Naive thymus-derived CD8-positive, alpha-beta T cell (primary cell): ENCODE measurements at regions of chr12 and their contacts with region 1.

Region 1: DNA sequence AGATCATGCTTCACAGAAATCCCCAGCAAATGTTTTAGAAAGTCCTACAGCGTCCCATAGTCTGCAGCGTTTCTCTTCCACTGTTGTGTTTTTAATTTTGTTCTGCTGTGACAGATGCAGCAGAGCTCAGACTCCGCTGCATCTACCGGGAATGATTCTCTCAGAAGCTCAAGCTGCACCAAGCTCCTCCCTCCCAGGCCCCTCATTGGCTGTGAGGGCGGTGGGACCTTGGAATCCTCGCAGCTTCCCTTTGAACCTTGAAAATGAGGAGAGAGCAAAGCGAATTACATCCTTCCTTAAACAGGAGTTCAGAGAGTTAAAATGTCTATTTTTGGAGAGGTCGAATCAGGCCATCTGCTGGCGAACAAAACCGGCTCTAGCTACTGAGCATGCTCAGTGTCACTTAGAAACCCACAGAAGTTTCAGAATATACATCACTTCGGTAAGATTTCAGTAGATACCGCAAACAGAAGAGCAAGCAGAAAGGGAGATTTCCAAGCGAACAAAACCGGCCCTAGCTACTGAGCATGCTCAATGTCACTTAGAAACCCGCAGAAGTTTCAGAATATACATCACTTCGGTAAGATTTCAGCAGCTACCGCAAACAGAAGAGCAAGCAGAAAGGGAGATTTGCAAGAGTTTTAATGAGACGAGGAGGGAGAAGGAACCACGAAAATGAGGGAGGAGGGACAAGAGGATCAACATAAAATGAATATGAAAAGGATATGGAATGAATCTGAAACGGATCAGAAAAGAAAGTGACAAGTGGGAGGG is at the start of gene ABCD2:
- DNase-seq: peak; percentile 51 to 88 (median 77)
- ATAC-seq: peak; percentile 82 to 84
- H3K4me3 Mint-ChIP-seq: no peak within 1 kb of the TSS
- H3K27ac Mint-ChIP-seq: no peak within 1 kb of the TSS
- H3K4me1 Mint-ChIP-seq: peaks cover 17 to 46% (median 38%) of the 10 kb centered on the region in 4 donors
- H3K27me3 Mint-ChIP-seq: no peaks in the 10 kb centered on the region
- polyA plus RNA-seq, gene ABCD2: 12.1 to 14.0 (median 12.7) TPM

Region 2: DNA sequence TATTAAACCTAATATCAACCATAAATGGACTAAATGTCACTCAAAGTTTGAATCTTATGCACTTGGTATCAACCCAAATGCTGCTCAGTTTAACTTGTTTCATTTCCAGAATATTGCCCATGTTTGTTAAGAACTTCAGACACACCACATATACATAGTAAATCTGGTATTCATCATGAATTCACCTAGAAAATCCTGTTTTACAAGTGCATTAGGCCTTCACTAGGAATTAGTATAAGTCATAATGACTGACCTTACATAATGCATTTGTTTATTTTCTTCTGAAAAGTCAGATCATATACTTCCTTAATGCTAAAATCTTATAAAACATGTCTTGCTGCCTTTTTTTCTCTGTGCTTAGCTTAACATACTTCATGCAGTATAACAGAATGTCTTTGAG is 66.4 kb before region 1 on chr12:
- POLR2A ChIA-PET with region 1: no interaction called
- DNase-seq: no peak
- ATAC-seq: no peak
- H3K4me3 Mint-ChIP-seq: no peak overlapping the region
- H3K27ac Mint-ChIP-seq: peak overlapping the region in 1 of 10 donors; percentile 37
- H3K4me1 Mint-ChIP-seq: peaks cover 0 to 6% (median 2%) of the 10 kb centered on the region in 4 donors
- H3K27me3 Mint-ChIP-seq: no peaks in the 10 kb centered on the region

Region 3: GRCh38 chr12:39605501-39605900 is 14.3 kb before region 1 on chr12:
- POLR2A ChIA-PET with region 1: interaction called, 14 read pairs
- DNase-seq: no peak
- ATAC-seq: peak in 1 of 2 donors; percentile 28
- H3K4me3 Mint-ChIP-seq: peak overlapping the region in 2 of 10 donors; percentile 3 to 13
- H3K27ac Mint-ChIP-seq: peak overlapping the region in 5 of 10 donors; percentile 11 to 81 (median 66)
- H3K4me1 Mint-ChIP-seq: peaks cover 13 to 43% (median 35%) of the 10 kb centered on the region in 4 donors
- H3K27me3 Mint-ChIP-seq: no peaks in the 10 kb centered on the region

Region 4: GRCh38 chr12:39643052-39643451 is 23.2 kb after region 1 on chr12:
- POLR2A ChIA-PET with region 1: no interaction called
- DNase-seq: no peak
- ATAC-seq: no peak
- H3K4me3 Mint-ChIP-seq: no peak overlapping the region
- H3K27ac Mint-ChIP-seq: no peak overlapping the region
- H3K4me1 Mint-ChIP-seq: peaks cover 2 to 8% (median 7%) of the 10 kb centered on the region in 4 donors
- H3K27me3 Mint-ChIP-seq: no peaks in the 10 kb centered on the region

Region 5: GRCh38 chr12:39671898-39672875 is 52.3 kb after region 1 on chr12:
- POLR2A ChIA-PET with region 1: interaction called, 42 read pairs
- DNase-seq: peak in 1 of 10 donors; percentile 61
- ATAC-seq: no peak
- H3K4me3 Mint-ChIP-seq: peak overlapping the region in 2 of 10 donors; percentile 51
- H3K27ac Mint-ChIP-seq: peak overlapping the region in 6 of 10 donors; percentile 38 to 75 (median 50)
- H3K4me1 Mint-ChIP-seq: peaks cover 27 to 73% (median 45%) of the 10 kb centered on the region in 4 donors
- H3K27me3 Mint-ChIP-seq: no peaks in the 10 kb centered on the region

Region 6: GRCh38 chr12:39682689-39683477 is 63.0 kb after region 1 on chr12:
- POLR2A ChIA-PET with region 1: interaction called, 14 read pairs
- DNase-seq: peak in 3 of 10 donors; percentile 40 to 65 (median 56)
- ATAC-seq: peak; percentile 86 to 87
- H3K4me3 Mint-ChIP-seq: peak overlapping the region; percentile 70 to 92 (median 86)
- H3K27ac Mint-ChIP-seq: peak overlapping the region; percentile 92 to 99 (median 95)
- H3K4me1 Mint-ChIP-seq: peaks cover 10 to 42% (median 27%) of the 10 kb centered on the region in 4 donors
- H3K27me3 Mint-ChIP-seq: no peaks in the 10 kb centered on the region

Region 7: GRCh38 chr12:39692258-39692853 is 72.5 kb after region 1 on chr12:
- POLR2A ChIA-PET with region 1: interaction called, 21 read pairs
- DNase-seq: peak in 3 of 10 donors; percentile 41 to 46 (median 45)
- ATAC-seq: peak in 1 of 2 donors; percentile 61
- H3K4me3 Mint-ChIP-seq: no peak overlapping the region
- H3K27ac Mint-ChIP-seq: no peak overlapping the region
- H3K4me1 Mint-ChIP-seq: peaks cover 0 to 7% (median under 1%) of the 10 kb centered on the region in 4 donors
- H3K27me3 Mint-ChIP-seq: no peaks in the 10 kb centered on the region